Gastrocnemius medialis (tissue), 4 donors: ENCODE measurements at regions of chr5 and their contacts with region 1.

Region 1: GRCh38 chr5:143824851-143825720 is 13.1 kb downstream of the HMHB1 start:
- DNase-seq: peak; percentile 60 to 73
- ATAC-seq: peak; percentile 87 to 97
- H3K4me3 ChIP-seq: peak overlapping the region in 1 of 4 donors; percentile 9
- H3K27ac ChIP-seq: no peak overlapping the region
- H3K4me1 ChIP-seq: peaks cover 0 to 10% of the 10 kb centered on the region in 2 donors
- H3K27me3 ChIP-seq: no peaks in the 10 kb centered on the region
- CTCF ChIP-seq: peak; percentile 83 to 96 (median 93)
- POLR2A ChIP-seq: no peak

Region 2: DNA sequence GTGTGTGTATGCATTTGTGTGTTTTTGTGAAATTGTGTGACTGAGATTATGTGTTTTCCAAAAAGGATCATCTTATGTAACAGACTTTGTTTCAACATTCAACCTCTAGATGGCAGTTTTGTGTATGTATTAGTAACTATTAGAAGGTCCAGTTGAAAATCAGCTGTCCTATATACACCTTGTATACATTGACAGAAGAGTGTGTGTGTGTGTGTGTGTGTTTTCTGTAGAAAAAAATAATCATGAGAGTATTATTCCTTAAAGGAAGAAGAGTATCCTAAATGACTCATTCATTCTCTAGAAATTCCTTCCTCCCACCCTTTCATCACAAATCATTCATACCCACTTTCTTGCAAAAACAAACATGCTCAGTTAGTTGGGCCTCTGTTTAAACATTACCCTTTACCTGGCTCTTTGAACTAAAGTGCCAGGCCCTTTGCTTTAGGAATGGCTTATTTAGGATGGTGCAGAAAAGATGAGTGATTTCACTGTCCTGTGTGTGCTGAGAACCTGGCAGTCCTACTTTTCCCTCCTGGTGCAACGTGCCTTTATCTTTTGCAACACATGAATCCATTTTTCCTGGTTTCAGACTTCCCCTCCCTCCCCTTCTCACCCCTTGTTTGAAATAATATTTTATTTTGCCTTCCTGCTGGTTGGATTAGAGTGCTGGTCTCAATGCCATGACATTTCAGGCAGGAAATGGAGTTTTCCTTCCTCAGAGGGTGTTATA is 902.7 kb before region 1 on chr5:
- in situ Hi-C with region 1: loop called (anchors 10 kb)
- intact Hi-C with region 1: loop called (anchors 1 kb)
- DNase-seq: no peak
- ATAC-seq: peak; percentile 58 to 76
- H3K4me3 ChIP-seq: no peak overlapping the region
- H3K27ac ChIP-seq: peak overlapping the region in 3 of 4 donors; percentile 12 to 22 (median 13)
- H3K4me1 ChIP-seq: peaks cover 8 to 24% of the 10 kb centered on the region in 2 donors
- H3K27me3 ChIP-seq: no peaks in the 10 kb centered on the region
- CTCF ChIP-seq: peak in 4 of 5 experiments; percentile 35 to 57 (median 48)
- POLR2A ChIP-seq: no peak

Region 3: DNA sequence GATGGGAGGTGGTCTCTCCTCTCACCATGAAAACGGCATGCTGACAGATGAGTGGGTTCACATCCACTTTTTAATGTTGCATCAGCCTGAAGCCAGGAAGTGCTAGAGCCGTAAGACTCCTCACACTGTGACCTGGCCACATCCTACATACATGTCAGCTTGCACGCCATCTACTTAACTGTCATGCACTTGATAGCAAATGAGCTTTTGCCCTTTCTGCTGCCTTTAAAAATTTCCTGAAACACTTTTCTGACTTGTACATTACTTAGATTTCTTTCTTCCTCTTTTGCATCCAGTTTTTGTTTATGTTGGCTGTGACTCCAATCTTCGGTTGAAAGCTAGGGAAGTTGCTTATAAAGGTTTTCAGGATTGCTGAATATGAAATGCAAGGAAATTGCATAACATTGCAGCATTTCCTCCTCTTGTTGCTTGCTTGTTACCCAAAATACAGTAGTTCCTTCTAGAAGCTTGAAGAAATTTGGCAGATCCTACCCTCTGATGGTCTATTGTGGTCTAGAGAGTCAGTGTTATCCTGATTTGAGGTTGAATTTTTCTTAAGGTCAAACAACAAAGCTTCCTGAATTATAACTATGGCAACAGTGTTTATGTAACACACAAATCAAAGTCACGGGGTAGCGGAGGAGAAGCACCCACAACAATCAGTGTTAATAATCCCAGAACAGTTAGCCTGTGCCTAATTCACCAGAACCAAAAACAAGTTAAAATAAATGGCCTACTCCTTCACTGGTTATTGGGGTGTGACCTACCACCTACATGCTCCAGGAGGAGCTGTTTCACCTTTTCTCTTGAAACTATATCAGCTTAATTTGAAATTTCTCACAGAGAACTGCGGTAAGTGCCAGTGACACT is 822.4 kb before region 1 on chr5:
- in situ Hi-C with region 1: loop called in 3 of 4 experiments (anchors 10 to 25 kb)
- intact Hi-C with region 1: loop called (anchors 1 kb)
- DNase-seq: no peak
- ATAC-seq: peak; percentile 58 to 72
- H3K4me3 ChIP-seq: no peak overlapping the region
- H3K27ac ChIP-seq: peak overlapping the region; percentile 52 to 76 (median 54)
- H3K4me1 ChIP-seq: peaks cover 38 to 39% of the 10 kb centered on the region in 2 donors
- H3K27me3 ChIP-seq: no peaks in the 10 kb centered on the region
- CTCF ChIP-seq: peak; percentile 49 to 69 (median 60)
- POLR2A ChIP-seq: peak in 1 of 2 donors; percentile 7

Region 4: DNA sequence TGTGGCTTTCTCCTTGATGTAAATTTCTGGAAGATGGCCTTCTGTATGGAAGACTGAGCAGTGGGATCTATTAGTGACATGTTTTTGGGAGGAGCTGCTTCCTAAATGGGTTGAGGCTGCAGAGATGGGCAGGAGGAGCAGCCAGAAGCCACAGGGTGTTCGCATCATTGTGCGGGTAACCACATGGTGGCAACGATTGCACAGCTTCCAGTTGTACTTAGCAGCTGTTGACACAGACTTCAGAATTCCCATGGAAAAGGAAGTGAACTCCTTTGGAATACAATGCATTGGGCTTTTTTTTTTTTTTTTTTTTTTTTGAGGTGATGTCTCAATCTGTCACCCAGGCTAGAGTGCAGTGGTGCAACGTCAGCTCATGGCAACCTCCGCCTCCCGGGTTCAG is 718.9 kb before region 1 on chr5:
- in situ Hi-C with region 1: loop called in 1 of 4 experiments (anchors 25 kb)
- intact Hi-C with region 1: loop called (anchors 5 kb)
- DNase-seq: peak in 1 of 2 donors; percentile 52
- ATAC-seq: peak; percentile 79 to 81
- H3K4me3 ChIP-seq: no peak overlapping the region
- H3K27ac ChIP-seq: no peak overlapping the region
- H3K4me1 ChIP-seq: peaks cover 35 to 55% of the 10 kb centered on the region in 2 donors
- H3K27me3 ChIP-seq: no peaks in the 10 kb centered on the region
- CTCF ChIP-seq: peak in 2 of 5 experiments; percentile 10 to 29
- POLR2A ChIP-seq: no peak

Region 5: GRCh38 chr5:143435210-143435657 is 389.9 kb before region 1 on chr5:
- in situ Hi-C with region 1: loop called in 2 of 4 experiments (anchors 25 kb)
- intact Hi-C with region 1: no loop called
- DNase-seq: peak; percentile 7 to 25
- ATAC-seq: peak in 1 of 2 donors; percentile 52
- H3K4me3 ChIP-seq: peak overlapping the region; percentile 30 to 51 (median 38)
- H3K27ac ChIP-seq: peak overlapping the region; percentile 39 to 53 (median 42)
- H3K4me1 ChIP-seq: peaks cover 0 to 10% of the 10 kb centered on the region in 2 donors
- H3K27me3 ChIP-seq: no peaks in the 10 kb centered on the region
- CTCF ChIP-seq: no peak
- POLR2A ChIP-seq: no peak